PC-3 (cell line): ENCODE measurements at regions of chr17 and their contacts with region 1.

Region 1: DNA sequence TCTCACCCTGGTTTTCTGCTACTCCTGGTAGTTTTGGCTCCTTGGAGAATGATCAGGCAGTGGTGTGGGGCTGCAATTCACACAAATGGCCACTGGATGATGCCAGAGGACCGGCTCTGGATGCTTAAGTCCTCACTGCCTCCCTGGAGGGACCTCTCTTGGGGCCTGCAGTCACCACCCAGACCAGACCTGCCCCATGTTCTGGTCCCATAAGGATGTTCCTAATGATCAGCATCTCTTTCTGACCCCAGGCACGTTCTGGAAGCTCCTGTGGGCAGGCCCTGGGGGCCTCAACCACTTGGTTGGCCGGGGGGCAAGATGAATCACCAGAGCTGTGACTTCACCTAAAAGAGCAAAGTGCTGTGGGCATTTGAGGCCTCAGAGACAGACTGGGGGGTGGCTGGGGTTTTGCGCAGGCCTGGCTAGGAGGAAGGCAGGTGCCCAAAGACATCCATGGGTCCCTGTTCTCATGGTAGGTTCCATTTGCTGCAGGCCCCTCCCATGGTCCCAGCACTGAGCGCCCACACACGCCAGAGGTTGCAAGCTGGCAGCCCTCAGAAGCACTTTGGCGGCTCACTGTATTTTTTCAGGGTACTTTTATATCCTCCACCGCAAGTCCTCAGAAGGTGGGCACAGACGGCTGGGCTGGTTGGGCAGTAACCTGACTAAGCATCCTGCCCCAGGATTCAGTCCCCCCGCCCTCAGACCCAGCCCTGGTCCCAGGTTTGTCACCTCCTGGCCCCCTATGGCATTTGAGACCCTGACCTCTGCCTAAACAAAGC is 53.2 kb downstream of the NT5M start:
- DNase-seq: peak; percentile 94
- ATAC-seq: peak; percentile 81
- H3K4me3 ChIP-seq: no peak overlapping the region
- H3K27ac ChIP-seq: no peak overlapping the region
- H3K4me1 ChIP-seq: peaks cover 7% of the 10 kb centered on the region; the same call in 1 of the 2 replicates
- H3K27me3 ChIP-seq: no peaks in the 10 kb centered on the region
- CTCF ChIP-seq: peak; percentile 99

Region 2: GRCh38 chr17:17641621-17642409 is 285.5 kb after region 1 on chr17:
- CTCF ChIA-PET with region 1: no interaction called
- POLR2A ChIA-PET with region 1: no interaction called
- intact Hi-C with region 1: loop called (anchors 1 kb)
- DNase-seq: peak; percentile 87
- ATAC-seq: peak; percentile 91
- H3K4me3 ChIP-seq: no peak overlapping the region
- H3K27ac ChIP-seq: no peak overlapping the region
- H3K4me1 ChIP-seq: no peaks in the 10 kb centered on the region
- H3K27me3 ChIP-seq: no peaks in the 10 kb centered on the region
- CTCF ChIP-seq: peak; percentile 97